Ovary (tissue), 10 donors: ENCODE measurements at regions of chr7 and their contacts with region 1.

Region 1: DNA sequence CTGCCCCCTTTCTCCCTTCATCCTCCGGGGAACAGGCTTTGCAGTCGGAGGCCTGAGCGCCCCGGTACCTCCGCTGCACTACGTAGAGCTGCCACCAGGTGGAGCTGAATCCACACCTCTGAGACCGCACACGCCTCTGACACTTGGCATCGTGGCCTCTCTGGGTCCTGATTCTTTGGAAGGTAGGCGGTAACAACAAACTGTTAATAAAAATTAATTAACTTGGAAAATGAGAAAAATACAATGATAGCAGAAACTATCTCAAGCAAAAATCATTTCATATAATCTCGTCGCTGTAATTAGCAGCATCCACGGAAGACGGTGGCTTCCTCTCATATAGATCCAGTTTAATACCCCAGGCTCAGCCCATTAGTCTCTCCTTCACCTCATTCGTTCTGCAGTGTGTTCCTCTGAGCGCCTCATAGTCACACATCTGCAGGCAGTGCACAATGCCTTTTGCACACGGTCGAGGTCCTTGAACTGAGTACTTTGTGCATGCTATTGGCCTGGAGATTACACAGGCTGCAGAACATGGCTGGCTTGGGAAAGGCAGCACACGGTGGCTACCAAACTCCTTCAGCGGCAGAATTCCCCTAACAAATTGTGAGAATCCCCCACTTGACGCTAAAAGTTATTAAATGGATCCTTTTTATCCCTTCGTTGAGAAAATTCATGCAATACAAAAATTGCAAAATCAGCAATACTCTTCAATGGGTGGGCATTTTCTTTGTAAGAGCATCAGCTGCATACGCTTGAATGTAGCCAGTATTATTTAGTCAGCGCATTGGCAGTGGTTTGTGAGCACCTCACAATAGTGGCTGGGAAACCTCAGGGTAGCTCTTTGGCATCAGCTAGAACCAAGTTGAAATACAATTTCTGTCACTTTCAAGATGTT is 18.7 kb downstream of the OR9A2 start:
- DNase-seq: peak; percentile 31 to 83 (median 62)
- H3K4me3 ChIP-seq: no peak overlapping the region
- H3K27ac ChIP-seq: no peak overlapping the region
- H3K4me1 ChIP-seq: no peaks in the 10 kb centered on the region
- H3K27me3 ChIP-seq: no peaks in the 10 kb centered on the region
- CTCF ChIP-seq: peak; percentile 21 to 75 (median 42)
- EP300 ChIP-seq: no peak
- POLR2A ChIP-seq: no peak

Region 2: GRCh38 chr7:142654398-142654797 is 353.9 kb before region 1 on chr7:
- intact Hi-C with region 1: no loop called
- DNase-seq: no peak
- H3K4me3 ChIP-seq: no peak overlapping the region
- H3K27ac ChIP-seq: no peak overlapping the region
- H3K4me1 ChIP-seq: no peaks in the 10 kb centered on the region
- H3K27me3 ChIP-seq: no peaks in the 10 kb centered on the region
- CTCF ChIP-seq: no peak
- EP300 ChIP-seq: no peak
- POLR2A ChIP-seq: no peak

Region 3: GRCh38 chr7:142853739-142854371 is 154.4 kb before region 1 on chr7:
- intact Hi-C with region 1: loop called in 3 of 4 experiments (anchors 5 to 10 kb)
- DNase-seq: peak; percentile 53 to 73 (median 65)
- H3K4me3 ChIP-seq: peak overlapping the region; percentile 89
- H3K27ac ChIP-seq: peak overlapping the region; percentile 60 to 87
- H3K4me1 ChIP-seq: peaks cover 1% of the 10 kb centered on the region
- H3K27me3 ChIP-seq: no peaks in the 10 kb centered on the region
- CTCF ChIP-seq: peak; percentile 45 to 71 (median 62)
- EP300 ChIP-seq: no peak
- POLR2A ChIP-seq: no peak

Region 4: GRCh38 chr7:143205560-143206293 is 197.5 kb after region 1 on chr7:
- intact Hi-C with region 1: loop called in 3 of 4 experiments (anchors 5 to 10 kb)
- DNase-seq: no peak
- H3K4me3 ChIP-seq: no peak overlapping the region
- H3K27ac ChIP-seq: no peak overlapping the region
- H3K4me1 ChIP-seq: no peaks in the 10 kb centered on the region
- H3K27me3 ChIP-seq: no peaks in the 10 kb centered on the region
- CTCF ChIP-seq: no peak
- EP300 ChIP-seq: no peak
- POLR2A ChIP-seq: no peak